ENCODE measurements at regions of chr14 and their contacts with region 1.

Region 1: GRCh38 chr14:81234278-81234677 is 13.5 kb upstream of the GTF2A1 start:
- DNase-seq: no peak
- H3K4me3 ChIP-seq: no peak overlapping the region
- H3K27ac ChIP-seq: no peak overlapping the region
- H3K4me1 ChIP-seq: peaks cover 0 to 3% (median 0%) of the 10 kb centered on the region in 4 experiments; a peak in 3 of 7 replicates
- H3K27me3 ChIP-seq: no peaks in the 10 kb centered on the region
- CTCF ChIP-seq: no peak
- EP300 ChIP-seq: no peak
- POLR2A ChIP-seq: no peak
- RAD21 ChIP-seq: no peak

Region 2: GRCh38 chr14:81256289-81256960 is 22.1 kb after region 1 on chr14:
- CTCF ChIA-PET with region 1: interaction called, 11 read pairs
- POLR2A ChIA-PET with region 1: interaction called, 3 read pairs
- DNase-seq: no peak
- H3K4me3 ChIP-seq: no peak overlapping the region
- H3K27ac ChIP-seq: no peak overlapping the region
- H3K4me1 ChIP-seq: peaks cover 0 to 4% (median 1%) of the 10 kb centered on the region in 4 experiments; a peak in 1 of 7 replicates
- H3K27me3 ChIP-seq: no peaks in the 10 kb centered on the region
- CTCF ChIP-seq: no peak
- EP300 ChIP-seq: no peak
- POLR2A ChIP-seq: no peak
- RAD21 ChIP-seq: no peak